GM12878 (cell line): ENCODE measurements at regions of chr22 and their contacts with region 1.

Region 1: DNA sequence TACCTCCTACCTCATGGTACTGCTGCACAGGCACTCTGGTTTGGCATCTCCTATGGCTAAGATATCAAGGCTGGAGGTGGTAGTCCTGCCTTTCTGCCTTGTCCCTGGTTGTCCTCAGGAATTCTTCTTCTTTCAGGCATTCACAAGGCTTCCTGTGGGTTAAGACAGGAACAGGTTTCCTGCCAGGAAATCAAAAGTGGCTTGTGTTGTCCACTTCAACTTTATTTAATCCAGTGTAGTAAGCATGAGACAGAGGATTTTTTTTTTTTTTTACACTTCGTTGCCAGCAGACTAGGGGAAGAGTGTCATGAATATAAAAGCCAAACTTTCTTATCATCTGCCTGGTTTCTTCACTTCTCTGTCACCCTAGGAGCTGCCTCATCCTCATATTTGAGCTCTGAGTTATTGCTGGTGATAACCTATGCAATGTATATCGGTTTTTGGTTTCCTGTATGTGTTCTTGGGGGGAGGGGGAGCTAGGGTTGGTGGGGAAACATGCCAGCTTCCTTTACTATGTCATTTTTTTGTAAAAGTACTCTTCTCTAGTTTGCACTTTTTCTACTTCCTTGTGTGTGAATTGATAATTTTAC is 50.2 kb downstream of the XKR3 start:
- DNase-seq: no peak
- ATAC-seq: no peak
- H3K4me3 ChIP-seq: no peak overlapping the region
- H3K27ac ChIP-seq: no peak overlapping the region
- H3K4me1 ChIP-seq: no peaks in the 10 kb centered on the region
- H3K27me3 ChIP-seq: no peaks in the 10 kb centered on the region
- CTCF ChIP-seq: no peak
- EP300 ChIP-seq: no peak
- POLR2A ChIP-seq: no peak
- RAD21 ChIP-seq: no peak

Region 2: DNA sequence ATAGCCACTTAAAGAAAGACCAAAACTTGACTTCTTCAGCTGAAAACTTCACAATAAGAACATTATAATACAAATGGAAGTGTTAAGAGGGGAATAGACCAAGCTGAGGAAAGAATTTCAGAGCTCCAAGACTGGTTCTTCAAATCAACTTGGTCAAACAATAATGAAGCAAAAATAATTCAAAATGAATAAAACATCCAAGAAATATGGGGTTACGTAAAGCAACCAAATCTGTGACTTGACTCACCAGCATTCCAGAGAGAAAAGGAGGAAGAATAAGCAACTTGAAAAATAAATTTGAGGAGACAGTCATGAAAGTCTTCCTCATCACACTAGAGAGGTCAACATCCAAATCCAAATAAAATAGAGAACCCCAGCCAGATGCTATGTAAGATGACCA is 18.8 kb after region 1 on chr22:
- CTCF ChIA-PET with region 1: no interaction called
- POLR2A ChIA-PET with region 1: no interaction called
- RAD21 ChIA-PET with region 1: no interaction called
- SMC1A ChIA-PET with region 1: no interaction called
- in situ Hi-C with region 1: no loop called
- intact Hi-C with region 1: no loop called
- DNase-seq: no peak
- ATAC-seq: no peak
- H3K4me3 ChIP-seq: no peak overlapping the region
- H3K27ac ChIP-seq: no peak overlapping the region
- H3K4me1 ChIP-seq: no peaks in the 10 kb centered on the region
- H3K27me3 ChIP-seq: no peaks in the 10 kb centered on the region
- CTCF ChIP-seq: no peak
- EP300 ChIP-seq: no peak
- POLR2A ChIP-seq: no peak
- RAD21 ChIP-seq: no peak

Region 3: GRCh38 chr22:16917144-16918003 is 142.4 kb after region 1 on chr22:
- CTCF ChIA-PET with region 1: no interaction called
- POLR2A ChIA-PET with region 1: no interaction called
- RAD21 ChIA-PET with region 1: no interaction called
- SMC1A ChIA-PET with region 1: no interaction called
- in situ Hi-C with region 1: no loop called
- intact Hi-C with region 1: loop called (anchors 10 kb)
- DNase-seq: peak; percentile 12
- ATAC-seq: peak; percentile 92
- H3K4me3 ChIP-seq: no peak overlapping the region
- H3K27ac ChIP-seq: no peak overlapping the region
- H3K4me1 ChIP-seq: no peaks in the 10 kb centered on the region; the same call in 1 of the 2 replicates
- H3K27me3 ChIP-seq: no peaks in the 10 kb centered on the region
- CTCF ChIP-seq: peak; percentile 69 to 77 (median 75)
- EP300 ChIP-seq: no peak
- POLR2A ChIP-seq: no peak
- RAD21 ChIP-seq: peak; percentile 69